ENCODE measurements at regions of chr3 and their contacts with region 1.

Region 1: GRCh38 chr3:48635222-48636021 is at the start of gene SLC26A6:
- DNase-seq: peak; percentile 100
- H3K4me3 ChIP-seq: peak within 1 kb of the TSS; percentile 96 to 99
- H3K27ac ChIP-seq: peak within 1 kb of the TSS; percentile 72 to 85
- H3K4me1 ChIP-seq: peaks cover 16 to 23% of the 10 kb centered on the region in 2 experiments
- H3K27me3 ChIP-seq: no peaks in the 10 kb centered on the region
- CTCF ChIP-seq: peak; percentile 76
- EP300 ChIP-seq: no peak; a peak in 1 of 4 replicates
- RAD21 ChIP-seq: peak; percentile 46
- polyA plus RNA-seq, gene SLC26A6: 31.9 and 39.6 TPM in 2 replicates

Region 2: DNA sequence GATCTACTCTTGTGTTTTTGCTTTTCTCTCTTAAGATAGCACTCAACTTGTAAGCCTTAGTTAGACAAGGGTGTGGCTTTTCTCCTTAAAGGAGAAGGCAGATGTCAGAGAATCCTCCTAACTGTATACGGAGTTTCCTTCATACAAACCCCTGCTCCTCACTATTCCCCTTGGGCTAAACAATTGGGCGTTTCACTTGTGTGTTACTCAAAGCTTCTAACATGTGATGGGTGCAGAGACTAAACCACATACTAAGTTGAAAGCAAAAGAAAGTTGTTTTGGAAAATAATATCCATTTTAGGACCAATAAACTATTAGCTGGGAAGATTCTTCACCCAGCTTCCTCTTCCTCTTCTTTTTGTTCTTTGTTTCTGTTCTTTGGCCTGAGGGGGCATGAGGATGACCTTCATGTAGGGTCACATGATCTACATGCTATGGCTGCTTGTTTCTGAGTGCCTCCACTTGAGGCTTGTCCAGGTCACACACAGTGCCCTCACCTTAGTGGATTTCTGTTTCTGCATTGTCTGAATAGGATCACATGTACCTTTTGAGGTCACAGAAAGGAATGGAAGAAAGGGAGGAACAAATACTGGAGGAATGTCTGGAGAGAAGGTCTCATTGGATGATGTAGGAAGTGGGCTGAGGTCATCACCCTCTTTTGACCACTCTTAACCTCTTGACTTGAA is 316.5 kb before region 1 on chr3:
- CTCF ChIA-PET with region 1: no interaction called
- POLR2A ChIA-PET with region 1: no interaction called
- DNase-seq: no peak
- H3K4me3 ChIP-seq: no peak overlapping the region
- H3K27ac ChIP-seq: no peak overlapping the region
- H3K4me1 ChIP-seq: no peaks in the 10 kb centered on the region
- H3K27me3 ChIP-seq: no peaks in the 10 kb centered on the region
- CTCF ChIP-seq: no peak
- EP300 ChIP-seq: no peak
- RAD21 ChIP-seq: no peak

Region 3: DNA sequence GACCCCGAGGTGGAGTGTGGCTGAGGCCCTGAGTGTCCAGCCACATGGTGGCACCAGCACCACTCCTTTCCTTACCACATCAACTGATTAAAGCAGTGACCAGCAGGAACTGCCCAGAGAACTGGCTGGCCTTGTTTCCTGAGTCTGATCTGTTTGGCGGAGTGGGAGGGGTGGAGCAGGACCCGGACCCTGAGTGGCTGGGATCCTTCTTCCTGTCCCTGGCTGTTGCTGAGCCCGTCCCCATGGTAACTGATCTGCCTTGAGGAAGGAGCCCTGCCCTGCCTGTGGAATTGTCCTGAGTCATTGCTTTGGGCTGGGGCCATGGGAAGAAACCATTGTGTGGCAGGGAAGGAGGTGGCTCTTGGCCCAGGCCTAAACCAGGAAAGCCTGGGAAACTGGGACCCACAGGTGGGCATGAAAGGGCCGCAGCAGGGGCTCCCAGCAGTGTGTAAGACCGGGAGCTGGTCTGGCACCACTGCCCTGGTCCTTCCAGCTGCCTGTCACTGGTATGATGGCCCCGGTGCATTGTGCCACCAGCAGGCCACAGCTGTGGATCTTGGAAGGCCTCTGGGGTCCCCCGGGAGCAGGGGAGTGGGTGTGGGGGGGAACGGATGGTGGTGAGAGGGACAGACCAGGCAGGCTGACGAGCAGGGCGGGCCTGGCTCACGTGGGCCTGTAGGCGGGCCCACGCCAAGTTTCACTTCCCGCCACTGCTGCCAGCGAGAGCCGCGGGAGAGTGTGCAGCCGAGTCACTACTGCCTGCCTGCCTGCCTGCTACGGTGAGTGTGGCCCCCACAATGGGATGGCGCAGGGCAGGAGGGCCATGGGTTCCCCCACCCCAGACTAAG is 169.7 kb before region 1 on chr3:
- CTCF ChIA-PET with region 1: interaction called, 10 read pairs
- POLR2A ChIA-PET with region 1: no interaction called
- DNase-seq: peak; percentile 97
- H3K4me3 ChIP-seq: peak overlapping the region; percentile 45 to 68
- H3K27ac ChIP-seq: peak overlapping the region; percentile 99 to 100
- H3K4me1 ChIP-seq: peaks cover 16 to 67% of the 10 kb centered on the region in 2 experiments; a peak in 2 of 4 replicates
- H3K27me3 ChIP-seq: no peaks in the 10 kb centered on the region
- CTCF ChIP-seq: peak; percentile 79
- EP300 ChIP-seq: peak in 1 of 2 experiments; percentile 58; a peak in 3 of 4 replicates
- RAD21 ChIP-seq: peak; percentile 94

Region 4: GRCh38 chr3:48609088-48610005 is 26.1 kb before region 1 on chr3 and contains the start of gene UQCRC1:
- CTCF ChIA-PET with region 1: interaction called, 40 read pairs
- POLR2A ChIA-PET with region 1: interaction called, 3 read pairs
- DNase-seq: peak; percentile 98
- H3K4me3 ChIP-seq: peak within 1 kb of the TSS; percentile 77 to 96
- H3K27ac ChIP-seq: peak within 1 kb of the TSS; percentile 51 to 78; a peak in 2 of 4 replicates
- H3K4me1 ChIP-seq: peaks cover 5 to 7% of the 10 kb centered on the region in 2 experiments; a peak in 3 of 4 replicates
- H3K27me3 ChIP-seq: no peaks in the 10 kb centered on the region
- CTCF ChIP-seq: peak; percentile 64
- EP300 ChIP-seq: no peak
- RAD21 ChIP-seq: peak; percentile 57
- polyA plus RNA-seq, gene UQCRC1: 284 and 317 TPM in 2 replicates

Region 5: GRCh38 chr3:48648188-48648850 is 12.9 kb after region 1 on chr3:
- CTCF ChIA-PET with region 1: interaction called, 12 read pairs
- POLR2A ChIA-PET with region 1: interaction called, 6 read pairs
- DNase-seq: no peak
- H3K4me3 ChIP-seq: no peak overlapping the region
- H3K27ac ChIP-seq: no peak overlapping the region
- H3K4me1 ChIP-seq: no peaks in the 10 kb centered on the region
- H3K27me3 ChIP-seq: no peaks in the 10 kb centered on the region
- CTCF ChIP-seq: no peak
- EP300 ChIP-seq: no peak
- RAD21 ChIP-seq: no peak

Region 6: GRCh38 chr3:48685602-48686511 is 50.4 kb after region 1 on chr3 and contains the start of gene NCKIPSD:
- CTCF ChIA-PET with region 1: interaction called, 15 read pairs
- POLR2A ChIA-PET with region 1: no interaction called
- DNase-seq: peak; percentile 98
- H3K4me3 ChIP-seq: peak within 1 kb of the TSS; percentile 85 to 96
- H3K27ac ChIP-seq: peak within 1 kb of the TSS; percentile 22 to 85
- H3K4me1 ChIP-seq: peaks cover 20 to 47% of the 10 kb centered on the region in 2 experiments
- H3K27me3 ChIP-seq: no peaks in the 10 kb centered on the region
- CTCF ChIP-seq: peak; percentile 73
- EP300 ChIP-seq: no peak
- RAD21 ChIP-seq: peak; percentile 61
- polyA plus RNA-seq, gene NCKIPSD: 20.4 and 24.9 TPM in 2 replicates

Region 7: DNA sequence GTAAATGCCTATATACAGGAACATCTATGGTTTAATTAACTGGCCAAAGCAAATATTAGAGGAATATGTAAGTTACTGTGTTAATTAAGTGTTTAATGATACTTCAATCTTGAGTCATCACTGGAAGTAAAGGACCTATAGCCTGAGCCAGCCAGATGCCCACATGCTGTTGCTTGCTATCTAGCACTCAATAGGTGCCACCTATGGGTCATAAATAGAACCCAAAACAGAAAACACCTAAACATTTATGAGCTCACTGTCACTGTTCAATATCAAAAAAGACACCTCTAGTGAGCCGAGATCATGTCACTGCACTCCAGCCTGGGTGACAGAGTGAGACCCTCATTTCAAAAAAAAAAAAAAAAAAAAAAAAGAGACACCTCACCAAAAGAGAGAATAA is 130.0 kb after region 1 on chr3:
- CTCF ChIA-PET with region 1: no interaction called
- POLR2A ChIA-PET with region 1: no interaction called
- DNase-seq: peak; percentile 27
- H3K4me3 ChIP-seq: no peak overlapping the region
- H3K27ac ChIP-seq: no peak overlapping the region
- H3K4me1 ChIP-seq: no peaks in the 10 kb centered on the region
- H3K27me3 ChIP-seq: no peaks in the 10 kb centered on the region
- CTCF ChIP-seq: peak; percentile 40
- EP300 ChIP-seq: no peak
- RAD21 ChIP-seq: peak; percentile 63